GM10248 (cell line): ENCODE measurements at regions of chr16 and their contacts with region 1.

Region 1: DNA sequence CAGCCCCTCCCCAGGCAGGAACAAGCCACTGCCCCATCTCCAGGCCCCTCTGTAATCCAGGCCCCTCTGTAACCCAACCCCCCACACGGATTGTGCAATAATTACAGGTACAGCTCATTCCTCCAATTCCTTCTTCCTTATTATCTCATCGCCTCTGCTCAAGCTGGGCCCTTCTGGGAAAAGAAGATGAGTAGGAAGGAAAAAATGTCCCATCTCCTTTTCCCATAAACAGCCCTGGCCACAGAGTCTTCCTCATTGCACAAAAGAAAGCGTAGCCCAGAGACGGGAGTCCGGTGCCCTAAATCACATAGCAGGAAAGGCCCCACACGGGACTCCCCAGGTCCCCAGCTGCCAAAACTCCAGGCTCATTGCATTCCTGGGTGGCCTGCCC is 3.6 kb upstream of the LITAFD start:
- DNase-seq: no peak
- CTCF ChIP-seq: no peak

Region 2: GRCh38 chr16:8567750-8568617 is 310.5 kb before region 1 on chr16:
- CTCF ChIA-PET with region 1: interaction called, 61 read pairs
- POLR2A ChIA-PET with region 1: no interaction called
- DNase-seq: peak; percentile 79
- CTCF ChIP-seq: peak; percentile 86

Region 3: DNA sequence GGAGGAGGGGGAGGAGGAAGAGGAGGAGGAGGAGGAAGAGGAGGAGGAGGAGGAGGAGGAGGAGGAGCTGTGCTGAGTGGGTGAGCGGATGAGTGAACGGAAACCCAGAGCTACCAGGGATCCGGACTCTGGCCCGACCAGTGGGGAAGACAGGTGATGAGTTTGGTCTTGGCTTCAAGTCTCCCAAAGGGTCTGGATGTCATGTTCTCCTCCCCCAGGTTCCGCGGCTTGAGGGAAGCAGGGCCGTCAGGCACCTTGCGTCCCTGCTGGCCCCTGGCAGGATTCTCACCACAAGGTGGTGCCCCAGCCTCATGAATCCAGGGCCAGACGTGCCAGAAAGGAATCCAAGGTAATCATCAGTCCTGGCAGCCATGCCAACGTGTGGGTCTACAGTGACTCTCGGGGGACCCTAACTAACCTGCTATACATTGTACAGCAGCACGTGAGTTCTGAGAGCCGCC is 217.6 kb before region 1 on chr16:
- CTCF ChIA-PET with region 1: interaction called, 33 read pairs
- POLR2A ChIA-PET with region 1: no interaction called
- DNase-seq: peak; percentile 60
- CTCF ChIP-seq: peak; percentile 76

Region 4: DNA sequence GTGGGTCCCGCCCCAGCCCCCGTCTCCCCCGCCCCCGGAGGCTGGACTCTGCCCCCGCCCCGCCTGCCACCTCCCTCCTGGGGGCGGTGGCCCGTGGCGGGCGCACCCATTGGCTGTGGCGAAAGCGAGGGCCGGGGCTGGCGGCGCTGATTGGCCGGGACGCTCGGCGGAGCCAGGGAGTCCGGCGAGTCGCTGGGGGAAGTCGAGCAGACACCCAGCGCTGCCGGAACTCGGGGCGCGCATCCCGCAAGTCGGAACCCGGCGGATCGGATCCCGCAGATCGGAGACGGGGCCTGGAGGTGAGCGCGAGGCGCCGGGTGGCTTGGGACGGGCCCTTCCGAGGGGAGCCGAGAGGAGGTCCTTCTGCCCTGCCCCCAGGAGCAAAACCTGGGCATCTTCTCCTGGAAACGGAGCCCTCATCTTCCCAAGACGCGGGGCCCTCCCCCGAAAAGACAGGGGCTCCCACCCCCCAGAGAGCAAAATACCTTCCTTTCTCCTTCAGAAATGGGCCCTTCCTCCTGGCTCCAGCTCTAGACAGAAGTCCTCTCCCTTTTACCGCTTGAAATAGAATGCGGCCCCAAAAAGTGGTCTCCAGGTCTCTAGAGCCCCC is 204.0 kb before region 1 on chr16 and contains the start of gene ABAT:
- CTCF ChIA-PET with region 1: interaction called, 17 read pairs
- POLR2A ChIA-PET with region 1: no interaction called
- DNase-seq: peak; percentile 98
- CTCF ChIP-seq: no peak

Region 5: GRCh38 chr16:8859899-8860881 is 18.3 kb before region 1 on chr16:
- CTCF ChIA-PET with region 1: interaction called, 15 read pairs
- POLR2A ChIA-PET with region 1: no interaction called
- DNase-seq: no peak
- CTCF ChIP-seq: no peak

Region 6: GRCh38 chr16:8892101-8892575 is 13.6 kb after region 1 on chr16:
- CTCF ChIA-PET with region 1: interaction called, 165 read pairs
- POLR2A ChIA-PET with region 1: no interaction called
- DNase-seq: peak; percentile 45
- CTCF ChIP-seq: no peak

Region 7: GRCh38 chr16:9027070-9027795 is 148.7 kb after region 1 on chr16:
- CTCF ChIA-PET with region 1: no interaction called
- POLR2A ChIA-PET with region 1: no interaction called
- DNase-seq: no peak
- CTCF ChIP-seq: no peak

Region 8: DNA sequence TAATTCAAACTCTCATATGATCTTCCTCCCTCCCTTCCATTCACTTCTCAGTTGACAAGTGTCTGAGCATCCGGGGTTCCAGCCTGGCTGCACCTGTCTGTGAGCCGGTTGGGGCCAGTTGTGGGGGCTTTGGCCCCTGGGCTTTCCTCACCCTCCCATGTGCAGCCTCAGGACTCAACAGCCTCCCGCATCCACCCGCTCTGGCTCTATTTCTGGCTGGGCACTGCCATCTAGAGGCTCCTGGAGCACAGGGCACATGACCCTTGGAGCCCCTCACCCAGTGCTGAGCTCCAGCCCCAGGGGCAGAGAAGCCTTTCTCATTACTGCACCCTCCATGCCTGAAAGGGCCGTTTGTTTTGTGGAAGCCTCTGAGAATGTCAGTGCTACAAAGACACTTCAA is 256.2 kb after region 1 on chr16:
- CTCF ChIA-PET with region 1: interaction called, 15 read pairs
- POLR2A ChIA-PET with region 1: no interaction called
- DNase-seq: peak; percentile 78
- CTCF ChIP-seq: peak; percentile 83